ENCODE measurements at regions of chr4 and their contacts with region 1.

Region 1: DNA sequence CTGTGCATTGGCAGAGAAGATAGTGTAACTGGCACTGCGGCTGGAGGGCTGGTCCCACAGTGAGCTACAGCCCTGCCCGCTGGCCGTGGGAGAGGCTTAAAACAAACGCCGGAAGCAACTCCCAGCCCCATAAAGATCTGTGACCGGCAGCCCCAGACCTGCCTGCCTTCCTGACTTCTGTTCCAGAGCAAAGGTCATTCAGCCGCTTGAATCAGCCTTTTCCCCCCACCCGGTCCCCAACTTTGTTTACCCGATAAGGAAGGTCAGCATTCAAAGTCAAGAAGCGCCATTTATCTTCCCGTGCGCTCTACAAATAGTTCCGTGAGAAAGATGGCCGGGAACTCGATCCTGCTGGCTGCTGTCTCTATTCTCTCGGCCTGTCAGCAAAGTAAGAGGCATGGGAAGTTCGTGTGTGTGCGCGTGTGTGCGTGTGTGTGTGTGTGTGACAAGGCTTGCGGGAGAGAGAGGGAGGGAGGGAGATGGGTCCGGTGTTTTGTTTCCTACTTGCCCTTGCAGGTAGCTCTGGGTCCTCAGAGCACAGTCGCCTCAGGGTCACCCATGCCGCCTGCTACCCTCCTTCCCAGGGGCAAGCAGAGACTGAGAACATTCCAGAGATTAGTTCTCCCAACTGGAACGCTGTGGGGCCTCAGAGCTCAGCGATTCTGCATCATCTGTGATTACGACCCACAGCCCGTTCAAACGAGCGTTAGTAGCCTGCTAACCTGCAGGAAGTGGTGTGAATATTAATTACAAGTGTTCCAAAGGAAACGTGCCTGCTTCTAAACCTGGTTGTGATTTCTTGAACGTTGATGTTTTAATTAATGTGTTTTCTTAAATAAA is at the start of gene MGST2:
- DNase-seq: peak; percentile 71 to 88
- ATAC-seq: peak; percentile 81 to 84 (median 82)
- H3K4me3 ChIP-seq: peak within 1 kb of the TSS; percentile 64
- H3K27ac ChIP-seq: peak within 1 kb of the TSS; percentile 88
- H3K4me1 ChIP-seq: peaks cover 28% of the 10 kb centered on the region
- H3K27me3 ChIP-seq: no peaks in the 10 kb centered on the region
- CTCF ChIP-seq: no peak
- total RNA-seq, gene MGST2: 18.2 to 56.2 (median 50.4) TPM

Region 2: DNA sequence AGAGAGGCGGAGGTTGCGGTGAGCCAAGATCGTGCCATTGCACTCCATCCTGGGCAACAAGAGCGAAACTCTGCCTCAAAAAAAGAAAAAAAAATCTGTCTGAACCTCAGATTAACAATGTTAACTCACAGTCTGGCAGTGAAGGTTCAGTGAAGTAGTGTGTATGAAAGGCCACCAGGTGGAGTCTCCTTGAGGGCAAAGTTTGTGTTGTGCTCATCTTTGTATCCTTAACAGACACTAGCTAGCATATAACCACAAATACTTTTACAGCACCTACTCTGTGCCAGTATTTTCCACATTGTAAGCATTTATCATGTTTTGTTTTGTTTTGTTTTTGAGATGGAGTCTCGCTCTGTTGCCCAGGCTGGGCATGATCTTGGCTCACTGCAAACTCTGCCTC is 46.3 kb before region 1 on chr4:
- intact Hi-C with region 1: no loop called
- DNase-seq: no peak
- ATAC-seq: peak in 2 of 4 donors; percentile 48 to 62
- H3K4me3 ChIP-seq: no peak overlapping the region
- H3K27ac ChIP-seq: no peak overlapping the region
- H3K4me1 ChIP-seq: no peaks in the 10 kb centered on the region
- H3K27me3 ChIP-seq: no peaks in the 10 kb centered on the region
- CTCF ChIP-seq: peak; percentile 27

Region 3: GRCh38 chr4:140243278-140243753 is 577.4 kb after region 1 on chr4:
- intact Hi-C with region 1: loop called in 1 of 2 experiments (anchors 5 kb)
- DNase-seq: no peak
- ATAC-seq: no peak
- H3K4me3 ChIP-seq: no peak overlapping the region
- H3K27ac ChIP-seq: no peak overlapping the region
- H3K4me1 ChIP-seq: peaks cover 34% of the 10 kb centered on the region
- H3K27me3 ChIP-seq: no peaks in the 10 kb centered on the region
- CTCF ChIP-seq: no peak

Measured in psoas muscle (tissue), 8 donors.